CD4-positive, alpha-beta T cell (primary cell): ENCODE measurements at regions of chr6 and their contacts with region 1.

Region 1: DNA sequence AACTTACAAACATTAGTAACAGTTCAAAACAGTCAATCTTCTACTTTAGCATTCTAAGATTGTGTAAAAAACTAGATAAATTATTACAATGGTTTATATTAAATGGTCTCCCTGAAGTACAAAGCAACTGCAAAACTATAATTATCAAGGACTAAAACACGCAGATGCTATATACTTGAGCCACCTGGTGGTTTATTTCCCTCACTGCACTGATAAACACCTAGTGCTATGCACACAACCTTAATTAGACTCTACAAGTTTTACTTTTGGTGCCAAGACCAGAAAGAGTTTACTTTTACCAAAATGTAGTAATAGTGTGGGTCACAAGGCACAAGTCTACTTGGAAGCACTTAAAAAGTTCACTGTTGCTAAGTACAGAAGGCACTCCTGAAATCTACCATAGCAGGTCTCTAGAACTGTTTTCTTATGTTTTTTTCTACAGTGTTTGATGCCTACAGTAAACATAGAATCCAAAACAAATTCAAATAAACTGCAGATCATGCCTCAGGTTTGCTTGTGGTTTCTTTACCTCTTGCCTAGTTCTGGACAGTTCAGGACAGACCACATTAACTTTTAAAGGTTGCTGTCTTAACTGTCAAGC is 49.2 kb downstream of the GMDS start:
- DNase-seq: peak in 7 of 14 experiments; percentile 7 to 69 (median 47)
- ATAC-seq: peak; percentile 58
- H3K4me3 ChIP-seq: no peak overlapping the region
- H3K4me3 Mint-ChIP-seq: no peak overlapping the region
- H3K27ac ChIP-seq: no peak overlapping the region
- H3K27ac Mint-ChIP-seq: no peak overlapping the region
- H3K4me1 ChIP-seq: no peaks in the 10 kb centered on the region
- H3K4me1 Mint-ChIP-seq: peaks cover 4% of the 10 kb centered on the region
- H3K27me3 ChIP-seq: no peaks in the 10 kb centered on the region
- H3K27me3 Mint-ChIP-seq: no peaks in the 10 kb centered on the region
- CTCF ChIP-seq: peak; percentile 82

Region 2: DNA sequence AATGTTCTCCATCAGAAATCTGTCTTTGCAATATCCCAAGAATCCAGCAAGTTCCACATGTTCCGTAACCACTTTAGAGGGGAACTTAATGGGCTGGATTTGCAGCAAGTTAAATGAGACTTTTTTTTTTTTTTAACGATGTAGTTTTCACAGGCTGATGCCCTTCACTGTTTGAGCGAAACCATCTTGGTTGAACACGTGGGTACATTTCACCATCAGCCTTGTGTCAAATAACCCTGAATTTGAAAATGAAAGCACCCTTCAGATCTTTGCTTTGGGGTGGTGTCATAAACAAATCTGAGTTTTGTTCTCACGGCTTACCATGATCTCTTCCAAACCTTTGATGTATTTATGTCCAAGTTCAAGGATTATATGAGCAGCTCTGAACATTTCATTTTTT is 1429.6 kb before region 1 on chr6:
- CTCF ChIA-PET with region 1: no interaction called
- POLR2A ChIA-PET with region 1: no interaction called
- intact Hi-C with region 1: no loop called
- DNase-seq: no peak
- ATAC-seq: no peak
- H3K4me3 ChIP-seq: no peak overlapping the region
- H3K4me3 Mint-ChIP-seq: no peak overlapping the region
- H3K27ac ChIP-seq: no peak overlapping the region
- H3K27ac Mint-ChIP-seq: no peak overlapping the region
- H3K4me1 ChIP-seq: no peaks in the 10 kb centered on the region
- H3K4me1 Mint-ChIP-seq: no peaks in the 10 kb centered on the region
- H3K27me3 ChIP-seq: peaks cover 2 to 4% of the 10 kb centered on the region in 2 experiments
- H3K27me3 Mint-ChIP-seq: peaks cover 34% of the 10 kb centered on the region
- CTCF ChIP-seq: no peak

Region 3: GRCh38 chr6:2103644-2104523 is 92.3 kb before region 1 on chr6:
- CTCF ChIA-PET with region 1: no interaction called
- POLR2A ChIA-PET with region 1: no interaction called
- intact Hi-C with region 1: loop called (anchors 1 to 2 kb)
- DNase-seq: peak in 3 of 14 experiments; percentile 44 to 50 (median 45)
- ATAC-seq: peak; percentile 58
- H3K4me3 ChIP-seq: no peak overlapping the region
- H3K4me3 Mint-ChIP-seq: no peak overlapping the region
- H3K27ac ChIP-seq: no peak overlapping the region
- H3K27ac Mint-ChIP-seq: no peak overlapping the region
- H3K4me1 ChIP-seq: no peaks in the 10 kb centered on the region
- H3K4me1 Mint-ChIP-seq: no peaks in the 10 kb centered on the region
- H3K27me3 ChIP-seq: no peaks in the 10 kb centered on the region
- H3K27me3 Mint-ChIP-seq: no peaks in the 10 kb centered on the region
- CTCF ChIP-seq: peak; percentile 63

Region 4: DNA sequence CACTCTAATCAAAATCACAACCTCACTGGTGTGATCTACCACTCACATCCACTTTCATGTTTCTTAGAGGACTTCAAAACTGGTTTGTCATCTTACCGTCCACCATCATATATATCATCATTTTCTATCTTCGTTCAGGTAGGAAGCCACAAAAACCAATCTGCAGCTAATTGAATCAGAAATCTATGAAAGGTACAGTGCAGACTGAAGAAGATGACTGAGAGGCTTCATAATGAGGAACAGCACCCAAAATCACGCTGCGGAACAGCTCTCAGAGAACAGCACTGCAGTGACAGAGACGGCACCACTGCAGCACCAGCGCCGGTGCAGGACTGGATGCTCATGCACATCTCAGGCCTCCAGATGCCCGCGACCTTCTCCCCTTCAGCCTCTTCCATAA is 36.3 kb after region 1 on chr6:
- CTCF ChIA-PET with region 1: no interaction called
- POLR2A ChIA-PET with region 1: no interaction called
- intact Hi-C with region 1: no loop called
- DNase-seq: no peak
- ATAC-seq: no peak
- H3K4me3 ChIP-seq: no peak overlapping the region
- H3K4me3 Mint-ChIP-seq: no peak overlapping the region
- H3K27ac ChIP-seq: no peak overlapping the region
- H3K27ac Mint-ChIP-seq: no peak overlapping the region
- H3K4me1 ChIP-seq: no peaks in the 10 kb centered on the region
- H3K4me1 Mint-ChIP-seq: peaks cover 20% of the 10 kb centered on the region
- H3K27me3 ChIP-seq: no peaks in the 10 kb centered on the region
- H3K27me3 Mint-ChIP-seq: no peaks in the 10 kb centered on the region
- CTCF ChIP-seq: no peak

Region 5: GRCh38 chr6:2634139-2634964 is 438.2 kb after region 1 on chr6:
- CTCF ChIA-PET with region 1: no interaction called
- POLR2A ChIA-PET with region 1: no interaction called
- intact Hi-C with region 1: loop called in 1 of 2 experiments (anchors 5 kb)
- DNase-seq: peak; percentile 68 to 90 (median 80)
- ATAC-seq: peak; percentile 94
- H3K4me3 ChIP-seq: peak overlapping the region; percentile 44
- H3K4me3 Mint-ChIP-seq: peak overlapping the region; percentile 84
- H3K27ac ChIP-seq: no peak overlapping the region
- H3K27ac Mint-ChIP-seq: no peak overlapping the region
- H3K4me1 ChIP-seq: peaks cover 9% of the 10 kb centered on the region
- H3K4me1 Mint-ChIP-seq: no peaks in the 10 kb centered on the region
- H3K27me3 ChIP-seq: peaks cover 0 to 5% of the 10 kb centered on the region in 2 experiments
- H3K27me3 Mint-ChIP-seq: peaks cover 22% of the 10 kb centered on the region
- CTCF ChIP-seq: peak; percentile 97